BJ (cell line): ENCODE measurements at regions of chr1 and their contacts with region 1.

Region 1: DNA sequence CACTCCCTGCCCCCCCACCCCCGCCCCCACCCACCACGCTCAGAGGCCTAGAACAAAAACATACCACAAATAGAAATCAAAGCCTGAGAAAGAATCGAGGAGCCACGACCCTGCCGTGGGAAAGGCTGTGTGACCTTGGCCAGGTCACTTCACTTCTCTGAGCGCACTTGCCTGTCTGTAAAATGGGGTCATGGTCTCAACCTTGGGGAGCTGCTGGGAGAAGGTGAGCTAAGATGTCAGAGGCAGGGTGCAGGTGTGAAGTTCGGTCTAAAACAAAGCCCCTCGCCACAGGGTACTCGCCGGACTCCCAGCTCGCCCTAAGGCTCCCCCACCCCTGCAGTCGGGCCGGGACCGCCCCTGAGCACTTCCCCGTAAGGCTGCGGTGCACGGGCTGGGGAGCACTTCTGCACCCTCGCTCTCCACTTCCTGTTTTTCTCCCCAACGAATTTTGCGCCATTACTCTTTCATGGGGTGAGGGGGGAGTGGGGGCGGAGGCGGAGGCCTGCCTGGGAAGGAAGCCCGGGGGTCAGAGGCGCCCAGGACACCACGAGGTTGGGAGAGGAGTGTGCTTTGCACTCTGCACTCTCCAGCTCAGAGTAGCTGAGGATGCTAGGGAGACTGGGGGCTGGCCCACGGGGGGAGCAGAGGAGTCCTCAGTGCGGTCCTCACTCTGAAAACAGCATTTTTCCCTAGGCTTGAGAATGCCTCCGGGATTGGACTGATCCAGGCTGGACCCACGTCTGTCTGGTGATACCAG is 21.9 kb upstream of the PIK3CD start:
- DNase-seq: no peak
- H3K4me3 ChIP-seq: no peak overlapping the region
- H3K27me3 ChIP-seq: no peaks in the 10 kb centered on the region
- CTCF ChIP-seq: no peak

Region 2: DNA sequence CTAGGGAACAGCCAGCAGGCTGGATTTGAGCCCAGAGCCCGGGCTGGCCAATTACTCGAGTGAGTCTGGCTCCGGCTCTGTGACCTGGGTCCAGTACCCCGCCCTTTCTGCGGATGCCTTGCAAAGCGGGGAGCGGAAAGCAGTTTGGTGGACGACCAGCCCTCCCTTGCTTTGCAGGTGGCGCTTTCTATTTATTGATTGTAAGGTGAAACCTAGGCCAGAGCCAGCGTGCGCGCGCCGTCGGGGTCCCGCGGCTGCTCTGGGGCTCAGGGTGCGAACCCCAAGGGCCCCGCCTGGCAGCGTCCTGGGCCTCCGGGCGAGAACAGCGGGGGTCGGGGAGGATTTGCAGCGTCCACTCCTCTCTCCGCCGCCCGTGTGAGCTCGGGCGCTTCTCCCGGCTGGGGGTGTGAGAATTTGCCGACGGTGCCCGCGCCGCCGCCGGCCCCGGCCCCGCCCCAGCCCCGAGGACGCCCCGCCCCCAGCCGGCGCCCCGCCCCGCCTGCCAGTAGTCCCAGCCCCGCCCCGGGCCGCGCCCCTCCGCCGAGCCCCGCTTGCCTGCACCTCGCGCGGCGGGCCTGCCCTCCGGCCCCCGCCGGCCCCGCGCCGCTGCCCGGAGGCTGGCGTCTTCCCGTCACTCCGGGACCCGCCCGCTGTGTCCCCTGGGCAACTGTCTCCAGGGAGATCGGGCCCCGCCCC is 59.5 kb after region 1 on chr1:
- CTCF ChIA-PET with region 1: interaction called, 15 read pairs
- POLR2A ChIA-PET with region 1: no interaction called
- DNase-seq: no peak
- H3K4me3 ChIP-seq: peak overlapping the region; percentile 69
- H3K27me3 ChIP-seq: no peaks in the 10 kb centered on the region
- CTCF ChIP-seq: no peak

Region 3: GRCh38 chr1:9717193-9718005 is 87.8 kb after region 1 on chr1:
- CTCF ChIA-PET with region 1: interaction called, 17 read pairs
- POLR2A ChIA-PET with region 1: interaction called, 4 read pairs
- DNase-seq: no peak
- H3K4me3 ChIP-seq: no peak overlapping the region
- H3K27me3 ChIP-seq: no peaks in the 10 kb centered on the region
- CTCF ChIP-seq: no peak

Region 4: DNA sequence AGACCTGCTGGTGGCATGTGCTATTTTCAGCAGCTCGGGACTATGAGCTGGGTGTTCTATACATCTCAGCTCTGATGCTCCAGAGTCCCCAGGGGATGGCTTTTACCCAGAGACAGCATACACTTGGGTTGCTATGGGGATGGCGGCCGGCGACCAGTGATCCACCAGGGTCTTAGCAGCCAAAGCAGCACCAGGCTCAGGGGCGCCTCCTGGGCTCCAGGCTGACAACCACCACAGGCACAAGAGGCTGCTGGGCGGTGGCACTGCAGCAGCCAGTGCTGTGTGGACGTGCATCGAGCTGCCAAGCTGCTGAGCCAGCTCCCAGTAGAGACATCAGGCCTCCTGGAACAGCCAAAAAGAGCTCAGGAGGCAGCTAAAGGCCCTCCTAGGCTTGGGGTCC is 231.7 kb after region 1 on chr1:
- CTCF ChIA-PET with region 1: interaction called, 38 read pairs
- POLR2A ChIA-PET with region 1: no interaction called
- DNase-seq: no peak
- H3K4me3 ChIP-seq: no peak overlapping the region
- H3K27me3 ChIP-seq: no peaks in the 10 kb centered on the region
- CTCF ChIP-seq: no peak

Region 5: GRCh38 chr1:9874959-9875635 is 245.5 kb after region 1 on chr1:
- CTCF ChIA-PET with region 1: interaction called, 50 read pairs
- POLR2A ChIA-PET with region 1: no interaction called
- DNase-seq: no peak
- H3K4me3 ChIP-seq: no peak overlapping the region
- H3K27me3 ChIP-seq: no peaks in the 10 kb centered on the region
- CTCF ChIP-seq: peak; percentile 95

Region 6: DNA sequence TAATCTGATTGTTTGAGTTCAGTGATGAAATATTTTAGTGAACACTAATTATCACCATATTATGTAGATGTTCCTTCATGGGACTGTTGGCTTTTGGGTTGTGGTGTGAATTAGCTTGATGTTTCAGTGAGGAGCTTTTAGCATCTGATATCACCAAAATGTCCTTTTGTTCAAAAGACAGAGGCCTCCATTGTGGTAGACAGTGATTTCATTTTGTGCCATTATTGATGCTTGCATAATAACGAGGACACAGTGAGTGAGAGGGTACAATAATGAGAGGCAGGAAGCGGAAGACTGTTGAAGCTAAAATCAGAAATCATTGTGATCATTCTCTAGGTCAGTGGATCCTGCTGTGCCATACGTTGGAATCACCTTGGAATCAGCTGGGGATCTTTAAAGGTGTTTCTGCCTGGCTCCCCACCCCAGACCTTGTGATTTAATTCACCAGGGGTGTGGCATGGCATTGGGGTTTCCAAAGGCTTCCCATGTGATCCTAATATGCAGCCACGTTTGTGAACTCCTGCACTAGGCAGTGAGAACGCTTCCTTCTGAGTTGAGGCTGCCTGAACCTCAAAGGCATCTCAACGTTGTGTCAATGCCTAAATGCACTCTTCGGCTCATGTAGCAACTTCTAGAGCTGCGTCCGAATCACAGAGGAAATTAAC is 498.6 kb after region 1 on chr1:
- CTCF ChIA-PET with region 1: no interaction called
- POLR2A ChIA-PET with region 1: no interaction called
- DNase-seq: no peak
- H3K4me3 ChIP-seq: no peak overlapping the region
- H3K27me3 ChIP-seq: no peaks in the 10 kb centered on the region
- CTCF ChIP-seq: no peak